ENCODE measurements at regions of chr17 and their contacts with region 1.

Region 1: GRCh38 chr17:50853015-50853615 is 13.0 kb downstream of the TOB1 start:
- DNase-seq: no peak
- H3K4me3 ChIP-seq: no peak overlapping the region
- H3K27ac ChIP-seq: no peak overlapping the region
- H3K4me1 ChIP-seq: peaks cover 11% of the 10 kb centered on the region
- H3K27me3 ChIP-seq: no peaks in the 10 kb centered on the region
- CTCF ChIP-seq: no peak

Region 2: GRCh38 chr17:50583641-50584040 is 269.5 kb before region 1 on chr17:
- CTCF ChIA-PET with region 1: no interaction called
- POLR2A ChIA-PET with region 1: interaction called, 21 read pairs
- intact Hi-C with region 1: no loop called
- DNase-seq: no peak
- H3K4me3 ChIP-seq: no peak overlapping the region
- H3K27ac ChIP-seq: no peak overlapping the region
- H3K4me1 ChIP-seq: peaks cover 10% of the 10 kb centered on the region
- H3K27me3 ChIP-seq: peaks cover 21% of the 10 kb centered on the region; the same call in 1 of the 2 replicates
- CTCF ChIP-seq: no peak

Region 3: GRCh38 chr17:50828508-50829170 is 24.5 kb before region 1 on chr17:
- CTCF ChIA-PET with region 1: no interaction called
- POLR2A ChIA-PET with region 1: no interaction called
- intact Hi-C with region 1: no loop called
- DNase-seq: no peak
- H3K4me3 ChIP-seq: no peak overlapping the region
- H3K27ac ChIP-seq: no peak overlapping the region
- H3K4me1 ChIP-seq: no peaks in the 10 kb centered on the region
- H3K27me3 ChIP-seq: 0 out of 2 replicates have a peak, but pooled peaks cover 4% of the 10 kb centered on the region
- CTCF ChIP-seq: no peak

Region 4: GRCh38 chr17:50949989-50950881 is 97.1 kb after region 1 on chr17:
- CTCF ChIA-PET with region 1: interaction called, 9 read pairs
- POLR2A ChIA-PET with region 1: interaction called, 6 read pairs
- intact Hi-C with region 1: loop called (anchors 1 kb)
- DNase-seq: peak; percentile 91 to 96
- H3K4me3 ChIP-seq: peak overlapping the region; percentile 34; the same call in 1 of the 2 replicates
- H3K27ac ChIP-seq: peak overlapping the region; percentile 73
- H3K4me1 ChIP-seq: peaks cover 59% of the 10 kb centered on the region
- H3K27me3 ChIP-seq: no peaks in the 10 kb centered on the region
- CTCF ChIP-seq: peak; percentile 90

Region 5: GRCh38 chr17:51056813-51057510 is 203.8 kb after region 1 on chr17:
- CTCF ChIA-PET with region 1: interaction called, 5 read pairs
- POLR2A ChIA-PET with region 1: no interaction called
- intact Hi-C with region 1: loop called (anchors 5 kb)
- DNase-seq: peak; percentile 23 to 58
- H3K4me3 ChIP-seq: no peak overlapping the region
- H3K27ac ChIP-seq: peak overlapping the region; percentile 29; the same call in 1 of the 2 replicates
- H3K4me1 ChIP-seq: peaks cover 18% of the 10 kb centered on the region
- H3K27me3 ChIP-seq: no peaks in the 10 kb centered on the region
- CTCF ChIP-seq: peak; percentile 82